Right ventricle myocardium inferior (tissue), 1 donor: ENCODE measurements at regions of chr1 and their contacts with region 1.

Region 1: GRCh38 chr1:32448773-32449456 is 16.0 kb upstream of the ZBTB8B start:
- DNase-seq: no peak
- ATAC-seq: no peak

Region 2: GRCh38 chr1:32500387-32501209 is 51.7 kb after region 1 on chr1:
- intact Hi-C with region 1: loop called (anchors 10 kb)
- DNase-seq: peak; percentile 91
- ATAC-seq: peak; percentile 89